ENCODE measurements at regions of chr10 and their contacts with region 1.

Region 1: DNA sequence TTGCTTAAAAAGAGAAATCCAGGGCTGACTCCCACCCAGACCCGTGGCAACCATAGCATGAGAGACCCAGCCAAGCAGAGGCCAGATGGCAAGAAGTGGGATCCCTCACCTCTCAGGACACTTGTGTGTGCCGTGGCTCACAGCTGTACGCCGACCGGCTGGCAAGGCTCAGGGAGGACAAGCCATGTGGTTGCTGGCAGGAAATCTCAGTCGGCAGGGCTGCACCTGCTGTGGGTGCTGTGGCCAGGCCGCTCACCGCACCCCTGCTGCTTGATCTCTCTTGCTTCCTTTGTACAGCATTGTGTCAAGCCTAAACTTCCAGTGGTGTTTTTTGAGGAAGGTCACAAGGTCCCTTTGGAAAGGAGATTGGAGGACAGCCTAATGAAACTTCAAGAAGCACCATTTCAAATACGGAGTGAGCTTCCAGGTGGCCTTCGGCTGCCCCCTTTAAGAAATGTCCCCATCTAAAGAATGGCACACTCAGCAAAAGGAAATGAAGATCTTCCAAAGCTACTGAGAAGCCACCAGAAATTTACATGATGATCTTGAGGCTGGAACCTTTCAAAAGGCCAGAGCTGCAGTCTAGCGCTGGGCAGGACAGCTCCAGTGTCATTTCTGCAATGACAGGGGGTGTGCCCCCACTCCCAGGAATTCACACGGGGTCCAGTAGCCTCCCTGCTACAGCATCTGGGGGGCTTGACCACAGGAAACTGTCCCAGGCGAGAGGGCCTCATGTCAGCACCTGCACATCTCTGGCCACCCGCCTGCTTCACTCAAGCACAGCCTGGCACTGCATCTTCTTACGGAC is 409.0 kb upstream of the MGMT start:
- DNase-seq: peak; percentile 70
- H3K4me3 Mint-ChIP-seq: no peak overlapping the region
- H3K27ac Mint-ChIP-seq: no peak overlapping the region
- H3K4me1 Mint-ChIP-seq: peaks cover 35% of the 10 kb centered on the region
- H3K27me3 Mint-ChIP-seq: no peaks in the 10 kb centered on the region

Region 2: GRCh38 chr10:129101232-129101980 is 43.3 kb after region 1 on chr10:
- CTCF ChIA-PET with region 1: no interaction called
- intact Hi-C with region 1: loop called (anchors 5 kb)
- DNase-seq: peak; percentile 16
- H3K4me3 Mint-ChIP-seq: no peak overlapping the region
- H3K27ac Mint-ChIP-seq: no peak overlapping the region
- H3K4me1 Mint-ChIP-seq: peaks cover 57% of the 10 kb centered on the region
- H3K27me3 Mint-ChIP-seq: no peaks in the 10 kb centered on the region

Measured in activated naive CD4-positive, alpha-beta T cell treated with anti-CD3 and anti-CD28 coated beads for 36 hours (primary cell).